ENCODE measurements at regions of chr20 and their contacts with region 1.

Region 1: DNA sequence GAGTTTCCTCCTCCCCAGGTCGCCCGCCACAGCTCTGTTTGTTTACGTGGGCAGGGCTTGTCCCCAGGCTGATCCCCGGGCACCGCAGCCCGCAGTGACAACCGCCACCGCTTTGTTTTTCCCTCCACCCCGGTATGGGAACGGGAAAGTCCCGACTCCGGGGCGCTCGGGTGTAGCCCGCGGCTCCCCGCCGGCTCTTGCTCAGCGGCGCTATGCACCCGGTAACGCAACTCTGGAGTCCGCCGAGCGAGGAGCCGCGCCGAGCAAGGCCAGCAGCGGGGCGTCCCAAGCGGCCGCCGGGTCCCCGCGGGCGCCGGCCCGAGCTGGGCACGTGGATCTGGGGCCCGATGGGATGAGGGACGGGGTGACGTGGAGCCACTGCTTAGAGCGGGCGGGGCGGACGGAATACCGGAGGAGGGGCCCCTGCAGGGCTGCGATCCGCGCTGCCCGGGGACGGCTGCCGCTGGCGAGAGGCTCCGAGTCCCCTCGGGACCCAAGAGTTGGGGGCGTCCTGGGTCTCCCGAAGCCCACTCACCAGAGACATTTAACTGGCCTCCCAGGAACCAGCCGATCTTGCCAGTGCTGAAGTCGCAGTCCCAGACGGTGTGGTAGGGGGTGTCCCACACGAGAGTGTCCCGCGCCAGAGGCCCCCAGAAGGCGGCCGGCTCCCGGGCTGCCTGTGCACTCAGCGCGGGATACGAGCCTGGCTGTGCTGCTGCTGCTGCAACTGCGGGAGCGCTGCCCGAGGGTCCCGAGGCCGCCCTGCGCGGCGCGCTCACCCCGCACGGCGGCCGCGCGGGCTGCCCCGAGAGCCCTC is 497 bp downstream of the ACSS1 start:
- DNase-seq: peak; percentile 84 to 93 (median 87)
- H3K4me3 ChIP-seq: peak overlapping the region; percentile 17 to 84
- H3K4me3 Mint-ChIP-seq: peak overlapping the region; percentile 87 to 93 (median 90)
- H3K27ac ChIP-seq: peak overlapping the region; percentile 82
- H3K27ac Mint-ChIP-seq: peak overlapping the region; percentile 88 to 96 (median 94)
- H3K4me1 ChIP-seq: peaks cover 58% of the 10 kb centered on the region
- H3K4me1 Mint-ChIP-seq: peaks cover 35 to 68% (median 47%) of the 10 kb centered on the region in 4 donors
- H3K27me3 ChIP-seq: no peaks in the 10 kb centered on the region
- H3K27me3 Mint-ChIP-seq: peaks cover 0 to under 1% of the 10 kb centered on the region in 2 donors

Region 2: DNA sequence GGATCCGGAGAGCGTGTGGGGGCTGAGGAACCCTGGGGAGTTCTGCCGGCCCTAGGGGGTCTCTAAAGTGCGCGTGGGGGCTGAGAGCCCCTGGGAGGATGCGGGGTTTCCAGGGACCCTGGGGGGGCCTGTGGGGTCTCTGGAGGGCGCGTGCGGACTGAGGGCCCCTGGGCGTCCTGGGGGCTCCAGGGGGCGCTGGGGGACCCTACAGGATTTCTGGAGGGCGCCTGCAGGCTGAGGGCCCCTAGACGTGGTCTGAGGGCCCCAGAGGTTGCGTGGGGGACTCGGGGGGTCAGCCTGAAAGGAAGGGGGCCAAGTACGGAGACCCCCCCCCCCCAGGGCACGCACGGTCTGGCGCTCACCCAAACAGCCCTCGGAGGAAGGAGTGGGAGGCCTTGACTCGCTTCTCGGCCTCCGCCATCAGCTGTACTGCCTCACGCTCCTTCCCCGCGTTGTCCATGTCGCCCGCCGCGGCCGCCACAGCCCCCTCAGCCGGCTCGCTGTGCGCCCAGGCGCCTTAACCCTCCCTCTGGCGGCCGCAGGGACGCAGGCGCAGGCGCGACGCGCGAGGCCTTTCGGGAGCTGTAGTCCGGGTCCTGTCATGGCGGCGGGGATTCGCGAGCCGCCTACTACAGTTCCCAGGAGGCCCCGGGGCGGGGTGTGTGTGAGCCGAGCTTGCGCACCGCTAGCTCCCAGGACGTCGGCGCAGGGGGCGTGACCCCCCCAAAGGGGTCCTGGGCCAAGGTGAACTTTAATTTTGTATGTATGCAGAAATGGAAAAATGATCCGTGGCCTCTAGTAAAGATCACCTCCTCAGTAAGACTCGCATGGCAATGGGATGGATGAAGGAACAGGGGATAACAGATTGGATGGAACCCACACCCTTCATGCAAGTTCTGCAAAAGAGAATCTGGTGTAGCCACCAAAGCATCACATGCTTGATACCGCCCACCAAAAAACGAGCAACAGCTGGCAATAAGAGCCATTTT is 1636.2 kb before region 1 on chr20 and contains the start of gene NAPB:
- CTCF ChIA-PET with region 1: no interaction called
- POLR2A ChIA-PET with region 1: no interaction called
- intact Hi-C with region 1: loop called (anchors 5 kb)
- DNase-seq: peak; percentile 90 to 92 (median 91)
- H3K4me3 ChIP-seq: peak within 1 kb of the TSS; percentile 73 to 84
- H3K4me3 Mint-ChIP-seq: peak within 1 kb of the TSS; percentile 83 to 91 (median 87)
- H3K27ac ChIP-seq: peak within 1 kb of the TSS; percentile 72
- H3K27ac Mint-ChIP-seq: peak within 1 kb of the TSS; percentile 84 to 91 (median 89)
- H3K4me1 ChIP-seq: peaks cover 21% of the 10 kb centered on the region
- H3K4me1 Mint-ChIP-seq: peaks cover 16 to 32% (median 26%) of the 10 kb centered on the region in 4 donors
- H3K27me3 ChIP-seq: no peaks in the 10 kb centered on the region
- H3K27me3 Mint-ChIP-seq: peaks cover 5 to 10% of the 10 kb centered on the region in 2 donors
- total RNA-seq, gene NAPB: 13.3 to 14.9 TPM

Region 3: GRCh38 chr20:24694727-24695597 is 362.5 kb before region 1 on chr20:
- CTCF ChIA-PET with region 1: no interaction called
- POLR2A ChIA-PET with region 1: no interaction called
- intact Hi-C with region 1: no loop called
- DNase-seq: no peak
- H3K4me3 ChIP-seq: no peak overlapping the region
- H3K4me3 Mint-ChIP-seq: no peak overlapping the region
- H3K27ac ChIP-seq: no peak overlapping the region
- H3K27ac Mint-ChIP-seq: no peak overlapping the region
- H3K4me1 ChIP-seq: no peaks in the 10 kb centered on the region
- H3K4me1 Mint-ChIP-seq: no peaks in the 10 kb centered on the region
- H3K27me3 ChIP-seq: no peaks in the 10 kb centered on the region
- H3K27me3 Mint-ChIP-seq: peaks cover 3 to 15% of the 10 kb centered on the region in 2 donors

Region 4: DNA sequence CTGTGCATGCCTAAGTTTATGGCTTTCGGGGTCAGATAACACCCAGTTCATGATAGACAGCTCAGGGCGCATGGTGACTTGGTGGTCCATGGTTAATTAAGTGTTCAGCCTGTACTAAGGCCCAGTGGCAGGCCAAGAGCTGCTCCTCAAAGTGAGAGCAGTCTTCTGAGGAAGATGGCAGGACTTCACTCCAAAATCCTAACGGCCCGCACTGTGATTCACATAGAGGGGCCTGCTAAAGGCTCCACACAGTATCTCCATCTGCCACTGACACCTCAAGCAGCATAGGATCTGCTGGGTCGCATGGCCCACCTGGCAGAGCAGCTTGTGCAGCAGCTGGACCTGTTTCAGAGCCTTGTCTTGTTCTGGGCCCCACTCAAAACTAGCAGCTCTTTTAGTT is 118.9 kb before region 1 on chr20:
- CTCF ChIA-PET with region 1: no interaction called
- POLR2A ChIA-PET with region 1: no interaction called
- intact Hi-C with region 1: no loop called
- DNase-seq: no peak
- H3K4me3 ChIP-seq: no peak overlapping the region
- H3K4me3 Mint-ChIP-seq: no peak overlapping the region
- H3K27ac ChIP-seq: no peak overlapping the region
- H3K27ac Mint-ChIP-seq: no peak overlapping the region
- H3K4me1 ChIP-seq: no peaks in the 10 kb centered on the region
- H3K4me1 Mint-ChIP-seq: peaks cover 0 to 1% (median under 1%) of the 10 kb centered on the region in 4 donors
- H3K27me3 ChIP-seq: no peaks in the 10 kb centered on the region
- H3K27me3 Mint-ChIP-seq: no peaks in the 10 kb centered on the region

Region 5: DNA sequence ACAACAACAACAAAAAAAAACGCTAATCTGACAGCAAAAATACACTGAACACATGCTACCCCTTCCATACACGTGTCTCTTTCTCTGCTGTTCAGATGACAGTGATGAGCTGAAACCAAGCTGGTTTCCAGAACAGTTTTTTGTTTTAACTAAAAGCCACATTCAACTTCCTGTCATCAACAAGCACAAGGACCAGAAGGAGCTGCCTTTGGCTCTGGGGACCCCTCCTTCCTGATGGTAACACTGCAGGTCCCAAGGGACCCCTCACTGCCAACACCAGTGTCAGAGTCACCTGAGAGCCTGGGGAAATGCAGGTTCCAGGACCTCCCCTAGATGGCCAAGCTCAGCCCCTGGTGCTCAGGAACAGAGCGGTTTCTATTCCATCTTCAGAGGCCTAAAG is 102.4 kb before region 1 on chr20:
- CTCF ChIA-PET with region 1: no interaction called
- POLR2A ChIA-PET with region 1: interaction called, 22 read pairs
- intact Hi-C with region 1: no loop called
- DNase-seq: peak in 4 of 5 donors; percentile 28 to 39 (median 32)
- H3K4me3 ChIP-seq: no peak overlapping the region
- H3K4me3 Mint-ChIP-seq: peak overlapping the region in 3 of 8 donors; percentile 42 to 68 (median 46)
- H3K27ac ChIP-seq: peak overlapping the region; percentile 38
- H3K27ac Mint-ChIP-seq: peak overlapping the region; percentile 56 to 90 (median 83)
- H3K4me1 ChIP-seq: peaks cover 30% of the 10 kb centered on the region
- H3K4me1 Mint-ChIP-seq: peaks cover 15 to 57% (median 35%) of the 10 kb centered on the region in 4 donors
- H3K27me3 ChIP-seq: no peaks in the 10 kb centered on the region
- H3K27me3 Mint-ChIP-seq: no peaks in the 10 kb centered on the region

Region 6: GRCh38 chr20:25090492-25091429 is 33.3 kb after region 1 on chr20:
- CTCF ChIA-PET with region 1: interaction called, 26 read pairs
- POLR2A ChIA-PET with region 1: interaction called, 60 read pairs
- intact Hi-C with region 1: loop called (anchors 2 kb)
- DNase-seq: peak; percentile 80 to 87 (median 82)
- H3K4me3 ChIP-seq: peak overlapping the region in 1 of 2 donors; percentile 23
- H3K4me3 Mint-ChIP-seq: peak overlapping the region in 7 of 8 donors; percentile 40 to 87 (median 71)
- H3K27ac ChIP-seq: peak overlapping the region; percentile 30
- H3K27ac Mint-ChIP-seq: peak overlapping the region; percentile 60 to 92 (median 87)
- H3K4me1 ChIP-seq: peaks cover 37% of the 10 kb centered on the region
- H3K4me1 Mint-ChIP-seq: peaks cover 31 to 38% (median 35%) of the 10 kb centered on the region in 4 donors
- H3K27me3 ChIP-seq: peaks cover 3% of the 10 kb centered on the region
- H3K27me3 Mint-ChIP-seq: peaks cover under 1 to 5% of the 10 kb centered on the region in 2 donors

Region 7: DNA sequence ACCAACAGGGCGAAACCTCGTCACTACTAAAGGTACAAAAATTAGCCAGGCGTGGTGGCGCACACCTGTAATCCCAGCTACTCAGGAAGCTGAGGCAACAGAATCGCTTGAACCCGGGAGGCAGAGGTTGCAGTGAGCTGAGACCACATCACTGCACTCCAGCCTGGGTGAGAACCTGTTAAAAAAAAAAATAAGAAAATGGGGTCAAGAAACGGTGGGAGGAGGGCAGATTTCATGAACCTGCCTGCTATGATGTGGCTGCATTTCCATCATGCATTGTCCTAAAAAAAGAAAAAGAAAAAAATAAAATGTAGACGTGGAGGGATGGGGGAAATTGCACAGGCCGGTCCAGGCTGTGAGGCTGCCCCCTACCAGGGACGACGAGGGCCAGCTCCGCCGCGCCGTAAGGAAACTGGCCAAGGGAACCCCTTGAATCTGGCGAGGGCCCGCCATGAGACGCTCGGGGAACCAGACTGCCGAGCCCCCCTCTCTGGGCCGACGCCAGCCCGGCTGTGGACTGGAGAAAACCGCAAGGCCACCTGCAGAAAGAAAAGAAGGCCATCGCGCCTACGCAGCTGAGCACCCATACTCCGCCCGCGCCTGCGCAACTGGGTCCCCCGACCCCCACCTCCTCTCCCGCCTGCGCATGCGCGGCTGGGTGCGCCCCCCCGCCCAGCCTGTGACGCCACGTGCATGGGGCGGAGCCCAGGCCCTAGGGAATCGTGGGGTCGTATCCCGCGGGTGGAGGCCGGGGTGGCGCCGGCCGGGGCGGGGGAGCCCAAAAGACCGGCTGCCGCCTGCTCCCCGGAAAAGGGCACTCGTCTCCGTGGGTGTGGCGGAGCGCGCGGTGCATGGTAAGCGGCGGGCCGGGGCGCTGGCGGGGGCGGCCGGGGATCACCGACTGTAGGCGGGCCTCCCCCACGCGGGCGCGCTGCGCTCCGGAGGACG is 137.8 kb after region 1 on chr20 and contains the start of gene ENTPD6:
- CTCF ChIA-PET with region 1: interaction called, 3 read pairs
- POLR2A ChIA-PET with region 1: interaction called, 30 read pairs
- intact Hi-C with region 1: loop called (anchors 1 kb)
- DNase-seq: peak; percentile 89 to 98 (median 93)
- H3K4me3 ChIP-seq: peak within 1 kb of the TSS; percentile 82 to 85
- H3K4me3 Mint-ChIP-seq: peak within 1 kb of the TSS; percentile 85 to 95 (median 90)
- H3K27ac ChIP-seq: peak within 1 kb of the TSS; percentile 77
- H3K27ac Mint-ChIP-seq: peak within 1 kb of the TSS; percentile 84 to 95 (median 93)
- H3K4me1 ChIP-seq: peaks cover 28% of the 10 kb centered on the region
- H3K4me1 Mint-ChIP-seq: peaks cover 33 to 46% (median 38%) of the 10 kb centered on the region in 4 donors
- H3K27me3 ChIP-seq: no peaks in the 10 kb centered on the region
- H3K27me3 Mint-ChIP-seq: no peaks in the 10 kb centered on the region
- total RNA-seq, gene ENTPD6: 90.2 to 94.3 TPM

Region 8: DNA sequence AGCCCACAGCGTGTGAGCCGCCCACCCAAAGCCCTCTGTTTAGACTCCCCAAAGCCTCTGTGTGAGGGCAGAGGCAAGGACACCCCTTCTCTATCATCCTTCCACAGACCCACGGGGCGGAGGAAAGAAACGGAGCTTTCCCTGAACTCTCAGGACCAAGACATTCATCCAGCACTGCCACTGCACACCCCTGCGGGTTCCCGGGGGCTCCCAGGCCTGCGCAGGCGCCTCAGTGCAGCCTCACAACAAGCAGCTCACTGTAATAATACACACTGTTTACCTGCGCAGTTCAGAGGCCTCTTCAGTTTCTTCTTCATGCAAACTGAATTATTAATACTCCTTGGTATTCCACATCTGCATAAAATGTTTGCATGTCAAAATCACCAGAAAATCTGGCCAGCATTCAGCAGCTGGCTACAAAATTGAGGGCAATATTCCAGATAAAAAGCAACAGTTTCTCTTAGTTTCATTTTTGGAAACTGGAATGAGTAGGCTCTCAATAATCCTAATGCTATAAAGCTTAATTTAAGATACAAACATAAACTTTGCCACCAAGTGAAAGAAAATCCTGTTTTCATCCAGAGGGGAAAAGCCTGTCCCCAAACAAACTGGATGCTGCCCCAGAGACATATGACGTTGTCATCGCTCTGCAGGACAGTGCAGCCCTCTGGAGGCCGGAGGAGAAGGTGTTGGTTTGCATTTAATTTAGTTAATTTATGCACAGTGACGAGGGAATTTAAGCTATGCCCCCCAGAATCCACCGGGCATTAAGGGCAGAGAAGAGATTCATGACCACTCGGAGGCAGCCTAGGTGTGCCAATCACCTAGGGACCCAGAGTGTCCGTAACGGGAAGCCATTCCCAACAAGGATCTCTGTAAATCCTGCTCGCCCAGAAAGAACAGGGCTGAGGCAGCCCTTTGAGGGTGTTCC is 482.6 kb after region 1 on chr20:
- CTCF ChIA-PET with region 1: no interaction called
- POLR2A ChIA-PET with region 1: no interaction called
- intact Hi-C with region 1: no loop called
- DNase-seq: no peak
- H3K4me3 ChIP-seq: no peak overlapping the region
- H3K4me3 Mint-ChIP-seq: no peak overlapping the region
- H3K27ac ChIP-seq: no peak overlapping the region
- H3K27ac Mint-ChIP-seq: no peak overlapping the region
- H3K4me1 ChIP-seq: no peaks in the 10 kb centered on the region
- H3K4me1 Mint-ChIP-seq: no peaks in the 10 kb centered on the region
- H3K27me3 ChIP-seq: no peaks in the 10 kb centered on the region
- H3K27me3 Mint-ChIP-seq: no peaks in the 10 kb centered on the region

Measured in CD4-positive, alpha-beta memory T cell (primary cell).